Activated CD4-positive, alpha-beta T cell treated with anti-CD3 and anti-CD28 coated beads, Interleukin-2, amount 10 ng/mL, durations not matched to agents 7 days and 5 days (primary cell): ENCODE measurements at regions of chr19 and their contacts with region 1.

Region 1: GRCh38 chr19:46840136-46840942 is 10.3 kb downstream of the AP2S1 start:
- DNase-seq: peak; percentile 58
- H3K4me3 Mint-ChIP-seq: no peak overlapping the region
- H3K27ac Mint-ChIP-seq: no peak overlapping the region
- H3K4me1 Mint-ChIP-seq: peaks cover 5% of the 10 kb centered on the region
- H3K27me3 Mint-ChIP-seq: no peaks in the 10 kb centered on the region

Region 2: GRCh38 chr19:46753420-46754155 is 86.8 kb before region 1 on chr19:
- CTCF ChIA-PET with region 1: interaction called, 42 read pairs
- POLR2A ChIA-PET with region 1: interaction called, 3 read pairs
- DNase-seq: peak; percentile 83
- H3K4me3 Mint-ChIP-seq: no peak overlapping the region
- H3K27ac Mint-ChIP-seq: no peak overlapping the region
- H3K4me1 Mint-ChIP-seq: peaks cover 18% of the 10 kb centered on the region
- H3K27me3 Mint-ChIP-seq: no peaks in the 10 kb centered on the region

Region 3: DNA sequence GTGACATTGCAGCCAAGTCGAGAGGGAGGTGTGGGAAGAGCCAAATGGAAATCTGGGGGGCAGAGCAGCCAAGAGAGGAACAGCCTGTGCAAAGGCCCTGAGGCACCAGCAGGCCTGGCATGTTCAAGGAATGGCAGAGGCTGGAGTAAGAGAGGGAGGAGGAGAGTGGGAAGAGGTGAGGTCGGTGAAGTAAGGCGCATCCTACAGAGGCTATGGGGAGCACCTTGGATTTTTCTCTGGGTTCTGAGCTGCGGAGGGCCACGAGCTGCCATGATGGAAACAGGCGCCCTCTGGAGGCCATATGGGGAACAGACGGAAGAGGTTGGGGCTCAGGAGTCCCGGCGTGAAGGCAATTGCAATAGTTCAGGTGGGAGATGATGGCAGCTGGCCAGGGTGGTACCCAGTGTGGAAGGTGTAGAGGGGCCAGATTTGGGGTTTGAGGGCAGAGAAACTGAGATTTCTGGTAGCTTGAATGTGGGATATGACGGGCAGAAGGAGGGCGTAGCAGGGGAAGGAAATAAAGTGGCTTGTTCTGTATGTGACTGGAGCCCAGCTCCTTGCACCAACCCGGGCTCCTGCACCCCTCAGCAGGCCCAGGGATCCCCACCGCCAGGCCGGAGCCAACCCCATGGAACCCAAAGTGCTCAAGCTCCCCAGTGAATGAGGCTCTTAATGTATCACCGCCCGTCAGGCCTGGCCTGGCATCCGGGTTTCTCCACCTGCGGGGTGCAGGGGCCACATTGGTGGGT is 73.6 kb before region 1 on chr19:
- CTCF ChIA-PET with region 1: interaction called, 10 read pairs
- POLR2A ChIA-PET with region 1: no interaction called
- DNase-seq: peak; percentile 68
- H3K4me3 Mint-ChIP-seq: no peak overlapping the region
- H3K27ac Mint-ChIP-seq: no peak overlapping the region
- H3K4me1 Mint-ChIP-seq: peaks cover 2% of the 10 kb centered on the region
- H3K27me3 Mint-ChIP-seq: no peaks in the 10 kb centered on the region

Region 4: GRCh38 chr19:46788262-46788967 is 51.9 kb before region 1 on chr19 and contains the start of gene SLC1A5:
- CTCF ChIA-PET with region 1: interaction called, 16 read pairs
- POLR2A ChIA-PET with region 1: no interaction called
- DNase-seq: peak; percentile 97
- H3K4me3 Mint-ChIP-seq: peak within 1 kb of the TSS; percentile 97
- H3K27ac Mint-ChIP-seq: peak within 1 kb of the TSS; percentile 93
- H3K4me1 Mint-ChIP-seq: peaks cover 65% of the 10 kb centered on the region
- H3K27me3 Mint-ChIP-seq: no peaks in the 10 kb centered on the region
- total RNA-seq, gene SLC1A5: 104 to 108 TPM

Region 5: DNA sequence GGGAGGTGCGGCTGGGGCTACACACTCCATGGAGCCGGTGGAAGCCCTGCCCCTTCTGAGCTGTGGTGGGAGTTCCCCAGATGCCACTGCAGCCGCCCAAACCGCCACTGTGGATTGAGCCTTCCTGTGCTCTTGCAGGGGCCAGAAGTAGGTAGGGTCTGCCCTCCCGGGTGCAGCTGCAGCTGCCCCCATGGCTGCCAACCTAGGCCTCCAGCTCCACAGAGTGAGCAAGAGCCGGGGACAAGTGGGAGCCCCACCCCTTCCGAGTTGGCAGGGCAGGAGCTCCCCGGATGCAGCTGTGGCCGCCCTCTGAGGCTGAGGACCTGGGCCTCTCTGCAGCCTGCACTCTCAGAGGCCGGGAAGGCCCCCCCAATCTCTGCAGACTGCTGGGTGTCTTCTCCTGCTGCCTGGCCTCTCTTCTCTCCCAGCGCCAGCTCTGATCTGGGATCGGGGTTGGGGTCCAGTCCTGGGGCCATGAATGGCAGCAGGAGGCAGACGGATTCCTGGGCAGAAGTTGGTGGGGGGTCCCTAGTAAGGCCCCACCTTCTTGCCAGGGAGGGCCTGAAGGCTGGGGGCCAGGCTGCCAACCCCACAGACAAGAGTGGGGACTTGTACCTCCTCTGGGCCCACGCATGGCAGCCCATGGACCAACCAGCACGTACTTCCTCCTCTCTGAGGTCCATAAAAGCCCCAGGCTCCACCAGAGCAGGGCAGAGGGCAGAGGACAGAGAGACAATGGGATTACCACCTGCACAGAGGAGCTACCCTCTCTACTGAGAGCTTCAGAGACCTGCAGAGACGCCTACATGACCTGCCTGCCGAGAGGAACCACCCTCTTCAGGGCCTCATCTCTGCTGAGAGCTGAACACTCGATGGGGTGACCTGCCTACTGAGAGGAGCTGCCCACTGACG is 18.6 kb before region 1 on chr19:
- CTCF ChIA-PET with region 1: interaction called, 10 read pairs
- POLR2A ChIA-PET with region 1: no interaction called
- DNase-seq: peak; percentile 61
- H3K4me3 Mint-ChIP-seq: peak overlapping the region; percentile 10
- H3K27ac Mint-ChIP-seq: peak overlapping the region; percentile 83
- H3K4me1 Mint-ChIP-seq: peaks cover 50% of the 10 kb centered on the region
- H3K27me3 Mint-ChIP-seq: no peaks in the 10 kb centered on the region

Region 6: GRCh38 chr19:46828484-46828883 is 11.9 kb before region 1 on chr19:
- CTCF ChIA-PET with region 1: interaction called, 28 read pairs
- POLR2A ChIA-PET with region 1: no interaction called
- DNase-seq: no peak
- H3K4me3 Mint-ChIP-seq: no peak overlapping the region
- H3K27ac Mint-ChIP-seq: no peak overlapping the region
- H3K4me1 Mint-ChIP-seq: peaks cover 17% of the 10 kb centered on the region
- H3K27me3 Mint-ChIP-seq: no peaks in the 10 kb centered on the region

Region 7: DNA sequence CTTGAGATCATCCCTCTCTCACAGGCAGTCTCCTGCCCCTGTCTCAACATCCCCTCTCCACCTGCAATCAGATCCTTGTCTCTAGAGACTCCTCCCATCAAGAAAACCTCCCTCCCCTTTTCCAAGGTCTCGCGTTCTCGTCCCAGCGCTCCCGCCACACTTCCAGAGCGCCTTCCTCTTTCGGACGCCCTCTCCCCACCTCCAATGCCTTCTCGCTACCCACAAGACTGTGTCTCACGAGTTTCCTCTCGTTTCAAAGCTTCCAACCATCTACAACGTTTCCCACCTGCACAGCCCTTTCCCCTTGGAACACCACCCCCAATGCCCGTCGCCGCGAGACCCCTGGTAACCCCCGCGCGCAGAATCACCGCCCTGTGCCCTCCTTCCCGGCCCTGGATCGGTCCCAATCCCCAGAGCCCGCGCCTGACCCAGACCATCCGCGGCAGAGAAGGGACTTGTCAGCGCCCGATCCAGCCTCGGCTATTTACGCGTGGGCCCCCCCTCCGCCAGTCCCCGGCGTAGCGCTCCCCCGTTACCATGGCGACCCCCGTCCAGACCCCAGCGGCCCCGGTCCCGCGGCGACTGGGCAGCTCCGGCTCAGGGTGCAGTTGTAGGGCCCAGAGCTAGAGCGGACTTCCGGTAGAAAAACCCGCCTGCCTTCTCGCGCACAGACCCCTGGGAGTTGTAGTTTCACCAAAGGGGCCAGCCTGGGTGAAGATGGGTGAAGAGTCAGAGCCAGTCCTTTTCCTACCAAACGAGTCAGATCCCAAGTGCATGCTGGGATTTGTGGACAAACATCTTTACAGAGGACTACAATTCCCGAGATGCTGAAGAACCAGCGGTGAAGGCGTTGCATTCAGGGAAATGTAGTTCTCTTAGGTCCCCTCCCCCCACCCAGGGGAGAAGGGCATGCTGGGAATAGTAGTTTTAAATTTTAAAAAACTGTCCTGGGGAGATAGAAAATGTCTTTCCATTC is 10.2 kb after region 1 on chr19 and contains the start of gene AP2S1:
- CTCF ChIA-PET with region 1: interaction called, 11 read pairs
- POLR2A ChIA-PET with region 1: no interaction called
- DNase-seq: peak; percentile 93
- H3K4me3 Mint-ChIP-seq: peak within 1 kb of the TSS; percentile 89
- H3K27ac Mint-ChIP-seq: peak within 1 kb of the TSS; percentile 87
- H3K4me1 Mint-ChIP-seq: peaks cover 29% of the 10 kb centered on the region
- H3K27me3 Mint-ChIP-seq: peaks cover 4% of the 10 kb centered on the region
- total RNA-seq, gene AP2S1: 130 to 136 TPM